Dorsolateral prefrontal cortex (tissue), 120 donors: ENCODE measurements at regions of chr1 and their contacts with region 1.

Region 1: DNA sequence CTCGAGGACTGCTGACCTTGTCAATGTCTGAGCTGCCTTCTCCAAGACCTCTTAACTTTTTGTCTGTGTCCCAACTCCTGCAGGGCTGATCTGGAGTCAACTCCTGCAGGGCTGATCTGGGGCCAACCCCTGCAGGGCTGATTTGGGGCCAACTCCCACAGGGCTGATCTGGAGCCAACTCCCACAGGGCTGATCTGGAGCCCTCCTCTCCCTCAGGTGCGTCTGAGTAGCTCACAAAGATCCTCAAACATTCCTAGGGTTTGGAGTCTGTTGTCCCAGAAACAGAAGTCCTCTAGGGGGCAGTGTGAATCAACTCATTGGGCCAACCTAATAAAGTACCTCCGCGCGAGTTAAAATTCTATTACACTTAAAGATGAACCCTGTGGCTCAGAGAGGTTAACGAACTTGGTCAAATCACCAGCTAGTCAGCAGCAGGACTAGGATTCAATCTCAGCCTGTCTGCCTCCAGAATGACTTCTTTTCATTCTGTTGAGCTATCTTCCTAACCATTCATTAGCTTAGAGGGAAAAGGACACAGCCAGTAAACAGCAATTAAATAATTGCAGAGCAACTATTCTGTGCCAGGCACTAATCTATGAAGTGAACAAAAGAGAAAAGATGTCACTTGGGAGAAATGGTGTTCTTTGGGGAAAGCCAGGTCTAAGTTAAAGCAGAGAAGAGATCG is 17.2 kb upstream of the RLF start:
- DNase-seq: peak in 4 of 10 donors; percentile 38 to 52 (median 45)
- H3K4me3 ChIP-seq: peak overlapping the region in 2 of 59 donors; percentile 1 to 10
- H3K27ac ChIP-seq: no peak overlapping the region
- H3K27me3 ChIP-seq: peaks cover 0 to 3% (median 0%) of the 10 kb centered on the region in 45 donors
- CTCF ChIP-seq: peak; percentile 59 to 89 (median 77)

Region 2: DNA sequence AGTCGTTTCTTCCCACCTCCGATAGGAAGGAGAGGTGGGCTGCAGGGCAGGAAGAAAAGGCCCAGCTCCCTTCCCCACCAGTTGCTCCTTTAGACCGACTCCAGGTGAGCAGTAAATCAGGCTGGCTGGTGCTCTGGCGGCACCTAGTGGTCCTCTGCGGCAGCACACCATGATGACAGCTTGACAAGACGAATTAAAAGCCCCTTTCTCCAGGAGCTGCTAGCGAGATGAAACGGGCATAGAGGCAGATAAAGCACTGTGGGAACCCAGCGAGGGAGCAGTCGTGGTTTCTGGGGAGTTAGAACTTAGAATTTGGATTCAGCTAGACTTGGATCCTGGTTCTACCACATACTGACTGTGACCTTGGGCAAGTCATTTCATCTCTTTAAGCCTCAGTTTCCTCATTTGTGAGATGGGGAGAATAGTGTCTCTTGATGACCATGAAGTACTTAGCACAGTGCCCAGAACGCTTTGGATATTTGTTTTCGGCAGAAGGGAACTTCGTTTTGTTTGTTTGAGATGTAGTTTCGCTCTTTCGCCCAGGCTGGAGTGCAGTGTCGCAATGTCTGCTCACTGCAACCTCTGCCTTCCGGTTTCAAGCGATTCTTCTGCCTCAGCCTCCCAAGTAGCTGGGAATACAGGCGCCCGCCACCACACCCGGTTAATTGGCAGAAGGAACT is 194.9 kb after region 1 on chr1:
- intact Hi-C with region 1: loop called (anchors 1 to 5 kb)
- DNase-seq: peak; percentile 61 to 89 (median 77)
- H3K4me3 ChIP-seq: peak overlapping the region in 18 of 59 donors; percentile 1 to 49 (median 14)
- H3K27ac ChIP-seq: peak overlapping the region in 3 of 59 donors; percentile 17 to 62 (median 59)
- H3K27me3 ChIP-seq: no peaks in the 10 kb centered on the region
- CTCF ChIP-seq: peak; percentile 79 to 99 (median 94)

Region 3: GRCh38 chr1:40438391-40439015 is 294.5 kb after region 1 on chr1:
- intact Hi-C with region 1: loop called in 1 of 2 experiments (anchors 10 kb)
- DNase-seq: peak in 1 of 10 donors; percentile 17
- H3K4me3 ChIP-seq: no peak overlapping the region
- H3K27ac ChIP-seq: no peak overlapping the region
- H3K27me3 ChIP-seq: no peaks in the 10 kb centered on the region
- CTCF ChIP-seq: peak; percentile 49 to 84 (median 73)